ENCODE measurements at regions of chr10 and their contacts with region 1.

Region 1: GRCh38 chr10:6088721-6089390 is at the start of gene RBM17:
- DNase-seq: peak; percentile 94 to 98 (median 96)
- ATAC-seq: peak; percentile 71 to 97 (median 92)
- H3K4me3 ChIP-seq: peak within 1 kb of the TSS; percentile 78 to 95 (median 92)
- H3K27ac ChIP-seq: peak within 1 kb of the TSS; percentile 81 to 95 (median 91)
- H3K4me1 ChIP-seq: peaks cover 7 to 64% (median 49%) of the 10 kb centered on the region in 12 donors
- H3K27me3 ChIP-seq: no peaks in the 10 kb centered on the region
- CTCF ChIP-seq: peak; percentile 99 to 100 (median 100)
- POLR2A ChIP-seq: peak in 1 of 2 donors; percentile 73
- total RNA-seq, gene RBM17: 29.2 to 83.9 (median 60.2) TPM

Region 2: DNA sequence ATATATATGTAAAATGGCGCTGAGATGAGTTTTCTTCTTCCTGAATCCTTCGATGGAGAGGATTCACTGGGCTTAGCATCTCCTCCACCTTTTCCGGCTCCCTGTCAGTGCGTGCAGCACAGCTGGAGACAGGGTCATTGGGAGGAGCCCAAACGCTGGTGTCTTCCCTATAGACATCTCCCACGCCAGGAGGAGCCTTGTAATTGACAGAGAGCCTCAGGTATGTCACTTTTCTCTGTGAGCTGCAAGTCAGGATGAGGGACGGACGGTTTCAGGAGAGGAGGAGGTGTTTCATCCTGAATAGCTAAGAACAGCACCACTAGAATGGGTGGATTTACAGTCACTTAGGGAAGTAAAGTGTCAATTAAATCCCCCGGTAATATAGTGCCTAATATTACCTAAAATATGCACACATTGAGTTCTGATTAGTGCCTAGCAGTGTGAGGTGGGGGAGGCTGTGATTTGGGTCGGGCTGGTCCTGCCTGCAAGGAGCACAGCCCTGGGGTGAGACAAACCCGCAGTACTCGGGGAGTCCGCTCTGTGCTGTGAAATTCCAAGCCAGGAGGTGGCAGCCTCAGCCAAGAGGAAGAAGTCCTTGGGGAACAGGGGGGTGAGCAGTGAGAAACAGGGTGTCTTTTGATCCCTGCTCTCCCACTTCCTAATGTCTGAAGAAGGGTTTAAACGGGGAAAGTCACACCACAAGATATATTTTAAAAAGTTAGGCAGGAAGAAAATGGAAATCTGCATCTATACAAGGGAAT is 139.7 kb before region 1 on chr10:
- intact Hi-C with region 1: loop called in 7 of 10 experiments (anchors 2 to 10 kb)
- DNase-seq: peak; percentile 60 to 79 (median 68)
- ATAC-seq: peak in 3 of 4 donors; percentile 28 to 50 (median 42)
- H3K4me3 ChIP-seq: no peak overlapping the region
- H3K27ac ChIP-seq: no peak overlapping the region
- H3K4me1 ChIP-seq: peaks cover 0 to 55% (median 30%) of the 10 kb centered on the region in 12 donors
- H3K27me3 ChIP-seq: no peaks in the 10 kb centered on the region
- CTCF ChIP-seq: peak; percentile 7 to 65 (median 40)
- POLR2A ChIP-seq: no peak

Region 3: DNA sequence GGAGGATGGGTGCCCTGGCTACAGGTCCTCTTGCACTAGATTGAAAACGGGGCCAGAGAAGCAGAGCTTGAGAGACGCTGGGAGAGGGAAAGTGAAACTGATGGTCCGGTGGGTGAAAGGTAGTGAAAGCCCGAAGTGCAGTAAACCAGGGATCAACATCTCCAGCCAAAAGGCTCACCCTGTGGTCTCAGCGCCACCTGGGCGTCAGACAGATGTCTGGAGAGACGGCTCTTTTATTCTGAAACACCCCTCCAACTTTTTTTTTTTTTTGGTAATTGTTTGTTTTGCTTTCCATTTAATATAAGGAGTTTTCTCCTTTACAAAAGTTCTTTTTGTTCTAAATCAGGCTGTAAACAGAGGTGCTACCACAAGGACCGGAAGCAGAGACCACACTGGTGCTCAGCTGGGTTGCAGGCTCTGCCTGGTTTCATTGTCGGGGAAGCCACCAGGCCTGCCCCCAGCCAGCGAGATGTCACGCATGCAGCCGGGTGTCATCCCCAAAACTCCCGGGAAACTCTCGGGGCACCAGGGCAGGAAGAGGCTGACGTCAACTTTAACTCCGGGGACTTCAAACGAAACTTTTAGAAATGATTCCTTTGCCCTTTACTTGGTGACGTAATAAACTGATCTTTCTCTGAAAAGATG is 37.9 kb before region 1 on chr10:
- intact Hi-C with region 1: loop called in 2 of 10 experiments (anchors 2 to 5 kb)
- DNase-seq: peak; percentile 55 to 73 (median 65)
- ATAC-seq: peak; percentile 55 to 66 (median 61)
- H3K4me3 ChIP-seq: peak overlapping the region in 11 of 12 donors; percentile 2 to 55 (median 41)
- H3K27ac ChIP-seq: peak overlapping the region; percentile 67 to 88 (median 74)
- H3K4me1 ChIP-seq: peaks cover 0 to 53% (median 24%) of the 10 kb centered on the region in 12 donors
- H3K27me3 ChIP-seq: no peaks in the 10 kb centered on the region
- CTCF ChIP-seq: peak; percentile 8 to 59 (median 42)
- POLR2A ChIP-seq: no peak

Region 4: DNA sequence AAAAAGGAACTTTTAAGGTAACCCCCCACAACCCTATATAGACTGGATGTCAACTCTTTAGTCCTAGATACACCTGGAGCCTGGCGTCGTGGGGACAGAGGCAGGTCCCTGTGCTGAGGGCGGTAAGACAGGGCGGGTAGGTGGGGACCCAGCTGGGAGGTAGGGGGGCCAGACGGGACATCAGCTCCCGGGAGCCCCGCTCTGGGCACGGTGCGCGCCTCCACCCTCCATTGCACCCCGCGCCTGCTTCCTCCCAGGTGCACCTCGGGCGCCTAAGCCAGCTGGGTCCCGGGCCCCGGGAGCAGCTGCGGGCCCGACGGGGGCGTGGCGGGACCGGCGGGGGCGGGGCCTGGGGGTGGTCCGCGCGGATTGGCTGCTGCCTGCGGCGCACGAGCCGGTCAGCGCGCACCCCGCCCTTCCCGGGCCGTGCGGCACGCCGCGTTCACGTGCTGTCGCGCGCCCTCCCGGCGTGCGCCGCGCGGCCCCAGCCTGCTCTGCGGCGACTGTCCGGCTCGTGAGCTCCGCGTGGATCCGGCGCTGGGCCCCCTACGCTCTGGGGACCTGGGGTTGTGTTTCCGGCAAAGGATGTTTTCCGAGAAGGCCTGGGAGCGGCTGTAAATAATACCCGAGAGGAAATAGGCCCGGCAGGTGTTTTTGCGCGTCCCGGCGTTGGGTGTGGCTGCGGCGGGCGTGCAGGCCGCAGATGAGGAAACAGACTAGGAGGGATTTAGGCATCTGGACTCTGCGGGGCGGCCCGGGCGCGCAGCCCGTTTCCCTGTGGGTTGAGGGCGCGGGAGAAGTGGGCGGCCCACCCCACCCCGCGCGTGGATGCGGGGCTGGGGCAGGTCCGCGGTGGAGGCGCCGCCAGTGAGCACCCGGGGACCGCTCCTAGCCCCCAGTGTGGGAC is 74.8 kb after region 1 on chr10:
- intact Hi-C with region 1: loop called in 1 of 10 experiments (anchors 5 kb)
- DNase-seq: peak; percentile 92 to 95 (median 94)
- ATAC-seq: peak; percentile 97 to 100 (median 98)
- H3K4me3 ChIP-seq: peak overlapping the region; percentile 55 to 93 (median 78)
- H3K27ac ChIP-seq: peak overlapping the region; percentile 83 to 99 (median 94)
- H3K4me1 ChIP-seq: peaks cover 4 to 44% (median 24%) of the 10 kb centered on the region in 12 donors
- H3K27me3 ChIP-seq: no peaks in the 10 kb centered on the region
- CTCF ChIP-seq: no peak
- POLR2A ChIP-seq: peak in 1 of 2 donors; percentile 58

Region 5: GRCh38 chr10:6401562-6402348 is 312.9 kb after region 1 on chr10:
- intact Hi-C with region 1: loop called in 4 of 10 experiments (anchors 1 to 5 kb)
- DNase-seq: peak; percentile 73 to 80 (median 79)
- ATAC-seq: peak; percentile 93 to 98 (median 96)
- H3K4me3 ChIP-seq: peak overlapping the region in 11 of 12 donors; percentile 4 to 49 (median 41)
- H3K27ac ChIP-seq: peak overlapping the region in 4 of 12 donors; percentile 2 to 76 (median 40)
- H3K4me1 ChIP-seq: peaks cover 0 to 46% (median 4%) of the 10 kb centered on the region in 12 donors
- H3K27me3 ChIP-seq: peaks cover 0 to 4% (median 0%) of the 10 kb centered on the region in 9 donors
- CTCF ChIP-seq: peak; percentile 62 to 89 (median 76)
- POLR2A ChIP-seq: no peak

Measured in heart left ventricle (tissue), 16 donors.